Activated CD4-positive, alpha-beta memory T cell treated with anti-CD3 and anti-CD28 coated beads for 36 hours (primary cell): ENCODE measurements at regions of chr6 and their contacts with region 1.

Region 1: DNA sequence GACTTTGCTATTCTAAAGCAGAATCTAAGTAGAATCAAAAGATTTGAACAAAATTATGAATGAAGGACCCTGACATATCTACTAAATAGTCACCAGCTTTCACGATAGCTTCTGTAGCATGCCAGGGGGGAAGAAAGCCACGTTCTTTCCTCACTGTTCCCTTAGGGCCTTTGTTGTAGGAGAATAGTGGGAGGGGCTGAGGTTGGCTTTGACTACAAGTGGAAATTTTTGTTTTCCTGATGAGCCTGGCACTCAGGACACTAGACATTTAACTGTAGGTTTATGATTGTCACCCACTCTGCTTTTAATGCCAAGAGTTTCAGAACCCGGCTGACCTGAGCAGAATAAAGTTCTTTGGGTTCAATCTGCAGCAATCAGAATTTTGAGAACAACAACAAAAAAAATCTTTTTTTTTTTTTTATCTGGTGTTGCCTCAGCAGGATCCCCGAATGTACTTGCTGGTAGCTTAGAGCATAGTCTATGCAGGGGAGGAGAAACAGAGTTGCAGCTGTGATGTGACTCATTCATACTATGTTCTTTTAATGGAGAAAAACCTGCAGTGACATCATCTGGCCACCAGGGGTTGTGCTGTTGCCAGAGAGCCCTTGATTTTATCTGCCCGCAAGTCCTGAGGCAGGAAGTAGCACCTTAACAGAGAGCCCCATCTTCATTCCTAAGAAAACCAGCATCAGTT is 38.5 kb downstream of the TPD52L1 start:
- DNase-seq: peak; percentile 74
- H3K4me3 Mint-ChIP-seq: no peak overlapping the region
- H3K27ac Mint-ChIP-seq: no peak overlapping the region
- H3K4me1 Mint-ChIP-seq: peaks cover 2% of the 10 kb centered on the region
- H3K27me3 Mint-ChIP-seq: peaks cover 1% of the 10 kb centered on the region

Region 2: GRCh38 chr6:124917769-124918168 is 274.3 kb before region 1 on chr6:
- CTCF ChIA-PET with region 1: no interaction called
- POLR2A ChIA-PET with region 1: no interaction called
- intact Hi-C with region 1: no loop called
- DNase-seq: no peak
- H3K4me3 Mint-ChIP-seq: no peak overlapping the region
- H3K27ac Mint-ChIP-seq: no peak overlapping the region
- H3K4me1 Mint-ChIP-seq: no peaks in the 10 kb centered on the region
- H3K27me3 Mint-ChIP-seq: peaks cover 1% of the 10 kb centered on the region

Region 3: DNA sequence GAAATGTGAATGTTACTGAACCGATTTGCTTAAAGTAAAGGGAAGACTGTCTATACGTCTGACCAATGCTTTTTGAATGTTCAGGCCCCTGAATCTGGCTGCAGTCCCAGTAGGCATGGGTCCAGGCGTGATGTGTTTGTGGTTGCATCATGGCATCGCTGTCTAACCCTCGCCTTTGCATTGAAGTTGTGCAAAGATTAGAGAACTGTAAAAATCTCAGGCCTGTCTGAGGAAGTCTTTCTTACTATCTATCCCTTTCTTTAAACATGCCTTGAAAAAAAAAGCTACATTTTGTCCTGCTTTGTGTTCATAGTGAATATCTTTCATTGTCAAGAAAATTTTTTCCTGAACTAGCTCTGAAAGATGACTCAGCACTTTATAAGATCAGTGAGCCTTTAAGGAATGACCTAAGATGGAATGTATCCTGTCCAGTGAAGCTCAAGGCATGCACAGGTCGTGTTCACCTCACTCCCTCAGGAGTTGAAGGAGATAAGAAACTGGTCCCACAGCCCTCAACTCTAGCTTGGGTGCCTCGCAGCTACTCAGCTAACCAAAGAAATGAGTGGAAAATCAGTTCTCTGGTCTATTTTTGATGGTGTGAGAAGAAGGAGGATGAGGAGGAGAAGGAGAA is 10.0 kb after region 1 on chr6:
- CTCF ChIA-PET with region 1: interaction called, 12 read pairs
- POLR2A ChIA-PET with region 1: no interaction called
- intact Hi-C with region 1: no loop called
- DNase-seq: no peak
- H3K4me3 Mint-ChIP-seq: no peak overlapping the region
- H3K27ac Mint-ChIP-seq: no peak overlapping the region
- H3K4me1 Mint-ChIP-seq: no peaks in the 10 kb centered on the region
- H3K27me3 Mint-ChIP-seq: peaks cover 3% of the 10 kb centered on the region

Region 4: GRCh38 chr6:125301435-125302391 is 109.7 kb after region 1 on chr6 and contains the start of gene HDDC2:
- CTCF ChIA-PET with region 1: interaction called, 4 read pairs
- POLR2A ChIA-PET with region 1: no interaction called
- intact Hi-C with region 1: loop called (anchors 5 kb)
- DNase-seq: peak; percentile 57
- H3K4me3 Mint-ChIP-seq: peak within 1 kb of the TSS; percentile 91
- H3K27ac Mint-ChIP-seq: peak within 1 kb of the TSS; percentile 95
- H3K4me1 Mint-ChIP-seq: peaks cover 54% of the 10 kb centered on the region
- H3K27me3 Mint-ChIP-seq: no peaks in the 10 kb centered on the region
- total RNA-seq, gene HDDC2: 88.9 to 92.3 TPM

Region 5: DNA sequence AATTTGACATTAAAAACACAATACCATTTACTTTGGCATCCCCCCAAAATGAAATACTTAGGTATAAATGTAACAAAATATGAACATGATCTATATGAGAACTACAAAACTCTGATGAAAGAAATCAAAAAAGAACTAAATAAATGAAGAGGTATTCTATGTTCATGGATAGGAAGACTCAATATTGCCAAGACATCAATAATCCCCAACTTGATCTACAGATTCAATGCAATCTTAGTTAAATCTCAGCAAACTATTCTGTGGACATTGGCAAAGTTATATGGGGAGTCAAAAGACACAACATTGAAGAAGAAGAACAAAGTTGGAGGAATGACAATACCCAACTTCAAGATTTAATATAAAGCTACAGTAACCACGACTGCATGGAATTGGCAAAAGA is 412.2 kb after region 1 on chr6:
- CTCF ChIA-PET with region 1: no interaction called
- POLR2A ChIA-PET with region 1: no interaction called
- intact Hi-C with region 1: no loop called
- DNase-seq: no peak
- H3K4me3 Mint-ChIP-seq: no peak overlapping the region
- H3K27ac Mint-ChIP-seq: no peak overlapping the region
- H3K4me1 Mint-ChIP-seq: no peaks in the 10 kb centered on the region
- H3K27me3 Mint-ChIP-seq: peaks cover 5% of the 10 kb centered on the region

Region 6: GRCh38 chr6:125759184-125759902 is 567.3 kb after region 1 on chr6:
- CTCF ChIA-PET with region 1: no interaction called
- POLR2A ChIA-PET with region 1: no interaction called
- intact Hi-C with region 1: loop called (anchors 10 kb)
- DNase-seq: peak; percentile 16
- H3K4me3 Mint-ChIP-seq: no peak overlapping the region
- H3K27ac Mint-ChIP-seq: no peak overlapping the region
- H3K4me1 Mint-ChIP-seq: peaks cover 3% of the 10 kb centered on the region
- H3K27me3 Mint-ChIP-seq: peaks cover 28% of the 10 kb centered on the region